Sigmoid colon (tissue), 7 donors: ENCODE measurements at regions of chr11 and their contacts with region 1.

Region 1: DNA sequence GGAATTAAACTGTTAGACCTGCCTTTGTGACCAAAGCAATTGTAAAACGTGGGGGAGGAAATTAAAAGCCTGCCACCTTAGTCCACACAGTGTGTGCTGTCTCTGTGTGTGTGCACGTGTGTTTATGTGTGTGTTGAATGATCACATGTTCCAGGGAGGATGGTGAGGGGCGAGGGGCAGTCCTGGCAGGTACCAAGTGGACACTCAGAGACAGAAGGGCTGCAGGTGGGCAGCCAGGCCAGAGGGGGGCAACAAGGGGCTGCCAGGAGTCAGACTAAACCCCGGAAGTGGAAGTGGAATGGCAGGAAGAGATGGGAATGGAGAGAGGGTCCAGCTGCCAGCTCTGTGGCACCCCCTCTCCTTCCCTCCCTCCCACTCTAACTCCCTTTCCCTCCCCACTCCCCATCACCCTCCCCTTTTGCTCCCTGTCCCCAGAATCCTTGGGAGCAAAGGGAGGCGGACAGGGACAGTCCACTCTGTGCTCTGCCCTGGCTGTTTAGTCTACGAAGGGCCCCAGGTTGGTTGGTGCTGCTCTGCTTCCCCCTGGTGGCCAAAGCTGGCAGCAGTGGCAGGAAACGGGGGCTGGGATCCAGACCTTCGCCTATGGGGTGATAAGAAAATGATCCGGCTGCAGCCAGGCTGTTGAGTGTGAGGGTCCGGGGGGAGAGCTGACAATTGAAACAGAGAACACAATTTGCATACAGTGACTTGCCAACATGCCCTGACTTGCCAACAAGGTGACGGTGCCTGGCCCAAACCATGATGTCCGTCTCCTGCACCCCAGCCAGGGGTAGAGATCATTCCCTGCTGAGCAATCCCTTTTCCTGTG is 24.4 kb downstream of the P2RY2 start:
- DNase-seq: peak; percentile 78
- H3K4me3 ChIP-seq: peak overlapping the region in 3 of 4 donors; percentile 17 to 33 (median 26)
- H3K27ac ChIP-seq: no peak overlapping the region
- H3K4me1 ChIP-seq: peaks cover 0 to 9% (median 5%) of the 10 kb centered on the region in 4 donors
- H3K27me3 ChIP-seq: no peaks in the 10 kb centered on the region
- CTCF ChIP-seq: peak; percentile 59 to 87 (median 80)
- EP300 ChIP-seq: no peak
- POLR2A ChIP-seq: no peak

Region 2: GRCh38 chr11:72831513-72832300 is 410.8 kb before region 1 on chr11:
- intact Hi-C with region 1: loop called (anchors 5 kb)
- DNase-seq: peak; percentile 93
- H3K4me3 ChIP-seq: no peak overlapping the region
- H3K27ac ChIP-seq: peak overlapping the region in 3 of 4 donors; percentile 8 to 71 (median 15)
- H3K4me1 ChIP-seq: peaks cover 0 to 52% (median 24%) of the 10 kb centered on the region in 4 donors
- H3K27me3 ChIP-seq: no peaks in the 10 kb centered on the region
- CTCF ChIP-seq: peak; percentile 91 to 96 (median 95)
- EP300 ChIP-seq: no peak
- POLR2A ChIP-seq: no peak

Region 3: DNA sequence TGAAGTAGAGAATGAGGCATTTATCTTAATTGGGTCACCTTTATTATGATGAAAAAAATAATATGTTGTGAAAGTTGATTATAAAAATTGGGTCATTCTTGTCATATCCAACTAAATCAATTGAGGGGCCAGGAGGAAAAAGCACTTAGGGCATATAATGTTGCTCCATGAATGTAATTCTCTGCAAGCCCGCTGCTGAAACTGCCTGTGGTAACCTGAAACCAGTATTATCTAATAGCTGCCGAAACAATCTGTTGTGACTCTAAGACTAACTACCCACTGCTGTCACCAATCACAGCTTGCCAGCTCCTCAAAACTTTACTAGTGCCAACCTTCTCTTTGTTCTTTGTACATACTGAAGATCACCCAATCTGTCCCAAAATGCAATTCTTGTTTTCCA is 312.5 kb before region 1 on chr11:
- intact Hi-C with region 1: loop called (anchors 10 kb)
- DNase-seq: no peak
- H3K4me3 ChIP-seq: no peak overlapping the region
- H3K27ac ChIP-seq: no peak overlapping the region
- H3K4me1 ChIP-seq: peaks cover 0 to 7% (median 2%) of the 10 kb centered on the region in 4 donors
- H3K27me3 ChIP-seq: no peaks in the 10 kb centered on the region
- CTCF ChIP-seq: no peak
- EP300 ChIP-seq: no peak
- POLR2A ChIP-seq: no peak

Region 4: DNA sequence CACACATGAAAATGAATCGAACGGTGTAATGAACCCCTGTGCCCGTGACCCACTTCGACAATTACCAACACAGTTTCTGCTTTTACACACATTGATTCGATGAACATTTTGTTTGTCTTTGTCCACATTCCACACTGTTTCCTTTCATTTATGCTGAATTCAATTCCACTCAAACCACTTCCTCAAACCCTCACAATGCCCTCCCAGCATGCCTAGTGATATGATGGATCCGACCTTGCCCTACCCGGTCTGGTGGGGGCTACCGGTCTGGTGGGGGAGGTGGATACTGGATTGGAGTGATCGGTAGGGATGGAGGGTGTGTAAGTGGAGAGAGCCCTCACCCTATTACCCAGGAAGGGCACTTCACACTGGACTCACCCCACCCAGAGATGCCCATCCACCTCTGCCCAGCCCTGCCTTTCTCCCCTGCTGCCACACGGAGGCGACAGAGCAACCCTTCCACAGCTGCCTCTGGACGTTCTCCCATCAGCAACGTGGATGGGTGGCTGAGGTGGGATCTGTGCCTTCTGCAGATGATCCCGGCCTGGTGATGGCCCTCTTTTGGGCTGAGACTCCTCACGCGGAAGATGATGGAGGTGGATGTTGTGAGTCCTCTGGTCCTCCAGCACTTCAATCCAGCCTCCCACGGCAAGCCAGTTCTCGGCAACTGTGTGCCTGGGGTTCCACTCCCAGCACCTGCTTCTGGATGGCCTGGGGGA is 57.4 kb before region 1 on chr11:
- intact Hi-C with region 1: loop called (anchors 2 kb)
- DNase-seq: peak; percentile 71
- H3K4me3 ChIP-seq: no peak overlapping the region
- H3K27ac ChIP-seq: no peak overlapping the region
- H3K4me1 ChIP-seq: peaks cover 0 to 10% (median 5%) of the 10 kb centered on the region in 4 donors
- H3K27me3 ChIP-seq: no peaks in the 10 kb centered on the region
- CTCF ChIP-seq: peak; percentile 64 to 83 (median 79)
- EP300 ChIP-seq: no peak
- POLR2A ChIP-seq: no peak